ENCODE measurements at regions of chr5 and their contacts with region 1.

Region 1: DNA sequence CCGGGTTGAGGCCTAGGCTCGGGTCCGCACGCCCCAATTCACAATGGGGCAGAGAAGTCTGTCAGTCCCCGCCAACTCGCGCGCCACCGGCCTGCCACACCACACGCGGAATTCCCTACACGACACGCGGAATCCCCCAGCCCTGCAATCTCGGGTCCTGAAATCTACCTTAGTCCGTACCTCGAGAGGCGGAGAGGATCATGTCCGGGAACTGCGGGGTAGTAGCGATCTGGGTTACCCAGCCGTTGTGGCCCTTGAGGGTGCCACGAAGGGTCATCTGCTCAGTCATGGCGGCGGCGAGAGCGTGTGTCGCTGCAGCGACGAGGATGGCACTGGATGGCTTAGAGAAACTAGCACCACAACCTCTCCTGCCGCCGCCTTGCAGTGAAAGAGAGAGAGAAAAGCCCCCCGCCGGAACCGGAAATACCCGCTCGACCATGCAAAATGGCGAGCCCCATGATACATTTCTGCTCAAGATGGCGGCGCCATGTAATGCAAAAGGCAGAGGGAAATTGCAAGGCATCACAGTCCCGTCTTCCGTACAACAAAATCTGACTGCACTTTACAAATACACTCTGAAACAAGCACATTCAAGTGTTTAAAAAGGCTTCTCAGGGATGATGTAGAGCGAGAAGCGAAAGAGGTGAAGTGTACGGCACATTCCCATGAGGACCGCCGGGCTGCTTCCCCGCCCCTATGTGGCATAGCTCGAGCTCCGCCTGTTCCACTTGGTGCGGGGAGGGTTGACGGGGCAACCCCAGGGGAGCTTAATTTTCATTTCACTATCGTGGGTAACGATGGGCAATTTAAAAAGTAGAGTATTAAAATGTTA is at the start of gene RACK1:
- DNase-seq: peak; percentile 82
- H3K4me3 Mint-ChIP-seq: peak within 1 kb of the TSS; percentile 96
- H3K27ac Mint-ChIP-seq: peak within 1 kb of the TSS; percentile 99
- H3K4me1 Mint-ChIP-seq: peaks cover 49% of the 10 kb centered on the region
- H3K27me3 Mint-ChIP-seq: no peaks in the 10 kb centered on the region
- total RNA-seq, gene RACK1: 2,098 and 2,121 TPM in 2 replicates

Region 2: DNA sequence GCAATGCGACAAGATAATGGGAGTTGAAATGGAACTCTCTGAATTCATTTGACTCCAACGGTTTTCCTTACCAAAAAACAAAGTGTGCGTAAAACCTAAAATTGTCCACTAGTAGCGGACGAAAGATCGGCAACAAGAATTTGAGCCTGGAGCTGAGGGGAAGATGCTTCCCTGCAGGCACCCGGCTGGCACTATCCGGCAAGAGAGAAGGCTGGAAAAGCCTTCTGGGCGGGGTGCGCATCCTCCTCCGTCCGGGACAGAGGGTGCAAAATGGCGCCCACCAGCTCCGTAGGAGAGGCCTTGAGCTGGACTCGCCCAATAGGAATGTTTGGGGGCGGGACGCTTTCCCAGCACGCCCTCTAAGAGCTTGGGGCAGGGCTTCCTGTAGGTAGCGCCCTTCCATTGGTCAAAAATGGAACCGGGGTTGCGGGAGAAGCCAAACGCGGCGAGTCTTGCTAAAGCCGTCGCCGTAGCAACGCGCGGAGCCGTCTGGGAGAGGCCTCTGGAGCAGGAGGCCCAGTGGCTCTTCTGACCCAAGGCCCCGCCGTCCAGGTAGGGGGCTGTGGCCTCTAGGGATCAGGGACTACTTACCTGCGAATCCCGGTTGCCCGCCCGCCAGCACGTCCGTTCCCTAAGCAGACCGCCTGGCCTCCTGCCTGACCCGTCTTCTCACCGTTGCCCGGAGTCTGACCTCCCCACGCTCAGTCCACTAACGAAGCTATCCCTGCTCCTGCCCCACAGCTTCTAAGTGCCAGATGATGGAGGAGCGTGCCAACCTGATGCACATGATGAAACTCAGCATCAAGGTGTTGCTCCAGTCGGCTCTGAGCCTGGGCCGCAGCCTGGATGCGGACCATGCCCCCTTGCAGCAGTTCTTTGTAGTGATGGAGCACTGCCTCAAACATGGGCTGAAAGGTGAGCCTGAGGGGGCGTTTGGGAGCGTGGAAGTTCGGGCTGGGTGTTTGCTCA is 1684.2 kb before region 1 on chr5:
- intact Hi-C with region 1: loop called (anchors 10 kb)
- DNase-seq: peak; percentile 93
- H3K4me3 Mint-ChIP-seq: peak overlapping the region; percentile 94
- H3K27ac Mint-ChIP-seq: peak overlapping the region; percentile 86
- H3K4me1 Mint-ChIP-seq: peaks cover 10% of the 10 kb centered on the region
- H3K27me3 Mint-ChIP-seq: no peaks in the 10 kb centered on the region

Region 3: GRCh38 chr5:180810210-180810958 is 433.3 kb before region 1 on chr5:
- intact Hi-C with region 1: loop called (anchors 5 kb)
- DNase-seq: peak; percentile 91
- H3K4me3 Mint-ChIP-seq: peak overlapping the region; percentile 84
- H3K27ac Mint-ChIP-seq: peak overlapping the region; percentile 99
- H3K4me1 Mint-ChIP-seq: peaks cover 78% of the 10 kb centered on the region
- H3K27me3 Mint-ChIP-seq: peaks cover 2% of the 10 kb centered on the region

Region 4: GRCh38 chr5:181191529-181192394 is 52.0 kb before region 1 on chr5:
- intact Hi-C with region 1: loop called (anchors 1 kb)
- DNase-seq: peak; percentile 94
- H3K4me3 Mint-ChIP-seq: peak overlapping the region; percentile 94
- H3K27ac Mint-ChIP-seq: peak overlapping the region; percentile 96
- H3K4me1 Mint-ChIP-seq: peaks cover 43% of the 10 kb centered on the region
- H3K27me3 Mint-ChIP-seq: peaks cover 8% of the 10 kb centered on the region

Region 5: DNA sequence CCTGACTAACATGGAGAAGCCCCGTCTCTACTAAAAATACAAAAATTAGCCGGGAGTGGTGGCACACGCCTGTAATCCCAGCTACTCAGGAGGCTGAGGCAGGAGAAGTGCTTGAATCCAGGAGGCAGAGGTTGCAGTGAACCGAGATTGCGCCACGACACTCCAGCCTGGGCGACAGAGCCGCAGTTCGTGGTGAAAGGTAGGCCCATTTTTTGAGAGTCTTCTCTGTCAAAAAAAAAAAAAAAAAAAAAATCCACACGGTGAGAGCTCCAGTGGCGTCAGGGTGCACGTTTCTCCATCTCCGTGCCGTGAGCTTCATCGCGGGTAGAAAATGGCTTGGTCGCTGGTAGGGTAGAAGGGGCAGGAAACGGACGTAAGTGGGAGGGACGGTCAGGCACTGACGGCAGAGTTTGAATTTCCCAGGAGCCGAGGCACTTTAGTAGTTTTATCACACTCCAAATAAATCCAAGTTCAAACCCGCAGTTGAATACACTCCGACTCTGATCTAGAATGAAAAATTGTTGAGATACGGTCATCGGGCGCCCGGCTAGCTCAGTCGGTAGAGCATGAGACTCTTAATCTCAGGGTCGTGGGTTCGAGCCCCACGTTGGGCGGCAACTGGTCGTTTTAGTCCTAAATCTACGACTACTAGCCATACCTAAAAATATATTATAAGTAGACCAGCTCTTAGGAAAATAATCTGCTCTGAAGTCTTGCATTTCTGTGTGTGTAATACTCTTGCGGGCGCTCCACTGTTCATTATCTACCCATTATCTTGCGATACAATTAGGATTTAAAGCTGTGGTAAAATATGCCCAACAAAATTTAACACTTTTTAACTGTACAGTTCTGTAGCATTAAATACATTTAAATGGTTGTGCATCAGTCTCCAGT is 36.3 kb before region 1 on chr5:
- intact Hi-C with region 1: loop called (anchors 5 kb)
- DNase-seq: peak; percentile 59
- H3K4me3 Mint-ChIP-seq: peak overlapping the region; percentile 89
- H3K27ac Mint-ChIP-seq: peak overlapping the region; percentile 95
- H3K4me1 Mint-ChIP-seq: peaks cover 34% of the 10 kb centered on the region
- H3K27me3 Mint-ChIP-seq: peaks cover 28% of the 10 kb centered on the region

Region 6: DNA sequence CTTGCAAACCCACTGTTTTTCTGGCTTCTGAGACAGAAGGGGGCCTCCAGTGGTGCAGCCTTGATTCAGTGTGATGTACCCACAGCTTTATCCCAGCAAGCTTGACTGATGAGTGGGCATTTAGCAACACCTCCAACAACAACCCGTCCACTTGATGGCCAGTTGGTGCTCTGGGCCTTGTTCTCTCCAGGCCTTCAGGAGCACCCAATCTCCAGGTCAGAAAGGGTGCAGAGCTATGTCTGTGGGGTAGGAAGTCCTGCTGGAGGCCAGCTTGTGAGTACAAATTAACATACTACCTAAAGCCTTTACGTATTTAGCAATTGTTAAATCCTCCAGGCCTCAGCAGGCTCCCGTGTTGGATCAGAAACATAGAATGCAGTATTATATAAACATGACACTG is 27.4 kb after region 1 on chr5:
- intact Hi-C with region 1: no loop called
- DNase-seq: no peak
- H3K4me3 Mint-ChIP-seq: no peak overlapping the region
- H3K27ac Mint-ChIP-seq: no peak overlapping the region
- H3K4me1 Mint-ChIP-seq: no peaks in the 10 kb centered on the region
- H3K27me3 Mint-ChIP-seq: peaks cover 3% of the 10 kb centered on the region

Measured in activated T-helper 1 cell treated with anti-CD3 and anti-CD28 coated beads, Interleukin-12 subunit alpha, Interleukin-12 subunit beta, Interleukin-2, Interleukin-4 antibody, amounts not matched to agents 30 ng/mL and 10 ng/mL and 1 ng/mL, durations not matched to agents 14 hours and 24 hours and 36 hours (primary cell).